ENCODE measurements at regions of chr1 and their contacts with region 1.

Region 1: GRCh38 chr1:206106328-206107167 is 10.6 kb downstream of the AVPR1B start:
- DNase-seq: peak; percentile 70 to 84 (median 80)
- ATAC-seq: peak; percentile 91
- H3K4me3 ChIP-seq: no peak overlapping the region
- H3K4me1 ChIP-seq: no peaks in the 10 kb centered on the region
- CTCF ChIP-seq: peak; percentile 78

Region 2: DNA sequence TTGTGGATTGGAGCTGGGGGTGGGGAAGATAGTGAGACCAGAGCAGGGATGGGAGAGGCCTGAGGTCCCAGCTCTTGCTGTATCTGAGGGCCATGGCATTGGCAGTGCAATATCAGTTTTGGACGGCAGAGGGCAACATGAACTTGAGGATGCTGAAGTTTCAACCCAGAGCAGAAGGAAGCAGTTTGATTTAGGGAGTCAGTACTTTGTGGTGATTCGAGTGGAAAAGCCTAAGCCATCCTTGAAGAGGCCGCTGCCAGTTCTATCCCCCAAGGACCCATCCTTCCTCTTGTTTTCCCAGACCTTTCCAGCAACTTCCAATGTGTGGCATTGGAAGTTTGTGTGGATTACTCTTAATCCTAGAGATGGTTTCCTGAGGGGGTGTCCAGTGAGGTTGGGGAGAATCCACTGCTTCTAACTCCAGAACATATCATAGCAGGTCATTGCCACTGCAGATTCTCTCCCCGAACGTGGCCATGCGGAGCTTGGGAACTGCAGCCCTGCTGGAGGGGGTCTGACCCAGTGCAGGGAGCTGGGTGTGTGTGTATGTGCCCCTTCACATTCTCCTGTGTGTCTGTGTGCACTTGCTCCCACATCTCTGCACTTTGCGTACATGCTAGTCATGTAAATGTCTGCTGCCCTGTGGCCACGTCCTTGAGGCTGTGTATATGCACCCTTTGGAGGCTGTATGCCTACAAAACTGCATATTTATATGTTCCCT is 187.4 kb before region 1 on chr1:
- intact Hi-C with region 1: loop called in 1 of 2 experiments (anchors 10 kb)
- DNase-seq: peak in 2 of 3 donors; percentile 75 to 87
- ATAC-seq: peak; percentile 79
- H3K4me3 ChIP-seq: no peak overlapping the region
- H3K4me1 ChIP-seq: no peaks in the 10 kb centered on the region
- CTCF ChIP-seq: peak; percentile 82

Region 3: GRCh38 chr1:205983925-205984725 is 122.4 kb before region 1 on chr1:
- intact Hi-C with region 1: loop called (anchors 5 to 10 kb)
- DNase-seq: peak in 2 of 3 donors; percentile 64 to 66
- ATAC-seq: peak; percentile 79
- H3K4me3 ChIP-seq: no peak overlapping the region
- H3K4me1 ChIP-seq: no peaks in the 10 kb centered on the region
- CTCF ChIP-seq: peak; percentile 44